ENCODE measurements at regions of chr14 and their contacts with region 1.

Region 1: DNA sequence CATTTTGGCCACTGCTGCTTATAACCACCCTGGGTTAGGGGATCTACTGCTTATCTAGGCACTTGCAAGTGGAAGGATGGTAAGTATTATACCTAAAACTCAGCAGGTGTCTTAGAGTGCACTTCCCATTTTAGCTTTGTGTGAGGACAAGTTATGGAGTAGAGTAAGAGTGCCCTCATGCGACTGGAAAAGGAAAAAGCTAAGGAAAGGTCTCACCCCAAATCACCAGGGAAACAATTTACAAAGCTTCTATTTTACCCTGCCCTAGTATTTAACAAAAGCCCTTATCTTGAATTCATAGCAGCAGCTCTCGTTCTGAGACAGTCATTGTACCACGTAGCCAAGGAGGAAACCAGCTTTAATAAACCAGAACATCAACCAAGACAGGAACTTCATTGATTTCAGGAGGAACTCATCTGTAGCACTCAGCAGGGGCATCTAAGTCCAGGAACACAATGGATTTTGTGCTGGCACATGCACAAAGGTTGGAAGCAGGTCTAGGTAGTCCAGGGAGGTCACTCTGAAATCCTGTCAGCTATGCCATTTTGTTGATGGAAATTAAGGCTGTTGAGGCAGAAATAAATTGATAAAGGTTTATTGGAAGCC is 2.9 kb downstream of the RDH12 start:
- DNase-seq: peak; percentile 77
- ATAC-seq: peak; percentile 78
- H3K4me3 ChIP-seq: no peak overlapping the region
- H3K4me3 Mint-ChIP-seq: no peak overlapping the region
- H3K27ac ChIP-seq: no peak overlapping the region
- H3K27ac Mint-ChIP-seq: no peak overlapping the region
- H3K4me1 ChIP-seq: peaks cover 2% of the 10 kb centered on the region in 2 donors
- H3K4me1 Mint-ChIP-seq: peaks cover 4% of the 10 kb centered on the region
- H3K27me3 ChIP-seq: no peaks in the 10 kb centered on the region
- H3K27me3 Mint-ChIP-seq: peaks cover 8% of the 10 kb centered on the region
- CTCF ChIP-seq: peak; percentile 72

Region 2: GRCh38 chr14:66359500-66359899 is 1345.1 kb before region 1 on chr14:
- CTCF ChIA-PET with region 1: interaction called, 21 read pairs
- POLR2A ChIA-PET with region 1: no interaction called
- intact Hi-C with region 1: no loop called
- DNase-seq: peak; percentile 68
- ATAC-seq: peak; percentile 36
- H3K4me3 ChIP-seq: no peak overlapping the region
- H3K4me3 Mint-ChIP-seq: no peak overlapping the region
- H3K27ac ChIP-seq: no peak overlapping the region
- H3K27ac Mint-ChIP-seq: no peak overlapping the region
- H3K4me1 ChIP-seq: no peaks in the 10 kb centered on the region
- H3K4me1 Mint-ChIP-seq: no peaks in the 10 kb centered on the region
- H3K27me3 ChIP-seq: peaks cover 0 to 5% (median 3%) of the 10 kb centered on the region in 4 experiments
- H3K27me3 Mint-ChIP-seq: peaks cover 11% of the 10 kb centered on the region
- CTCF ChIP-seq: peak; percentile 79

Region 3: DNA sequence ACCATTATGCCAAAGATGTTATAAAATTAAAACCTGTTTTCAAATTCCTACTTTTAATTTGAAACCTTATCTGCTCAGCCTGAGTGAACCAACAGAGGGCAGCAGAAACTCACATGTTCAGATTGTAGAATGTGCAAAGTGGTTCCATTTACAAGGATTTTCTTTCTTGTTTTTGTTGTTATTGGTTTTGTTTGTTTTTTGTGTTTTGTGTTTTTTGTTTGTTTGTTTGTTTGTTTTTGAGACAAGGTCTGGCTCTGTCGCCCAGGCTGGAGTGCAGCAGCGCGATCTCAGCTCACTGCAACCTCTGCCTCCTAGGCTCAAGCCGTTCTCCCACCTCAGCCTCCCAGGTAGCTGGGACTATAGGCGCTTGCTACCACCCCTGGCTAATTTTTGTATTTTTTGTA is 538.1 kb before region 1 on chr14:
- CTCF ChIA-PET with region 1: no interaction called
- POLR2A ChIA-PET with region 1: no interaction called
- intact Hi-C with region 1: loop called (anchors 10 kb)
- DNase-seq: peak; percentile 43
- ATAC-seq: no peak
- H3K4me3 ChIP-seq: no peak overlapping the region
- H3K4me3 Mint-ChIP-seq: no peak overlapping the region
- H3K27ac ChIP-seq: no peak overlapping the region
- H3K27ac Mint-ChIP-seq: no peak overlapping the region
- H3K4me1 ChIP-seq: no peaks in the 10 kb centered on the region
- H3K4me1 Mint-ChIP-seq: no peaks in the 10 kb centered on the region
- H3K27me3 ChIP-seq: no peaks in the 10 kb centered on the region
- H3K27me3 Mint-ChIP-seq: no peaks in the 10 kb centered on the region
- CTCF ChIP-seq: peak; percentile 75

Region 4: DNA sequence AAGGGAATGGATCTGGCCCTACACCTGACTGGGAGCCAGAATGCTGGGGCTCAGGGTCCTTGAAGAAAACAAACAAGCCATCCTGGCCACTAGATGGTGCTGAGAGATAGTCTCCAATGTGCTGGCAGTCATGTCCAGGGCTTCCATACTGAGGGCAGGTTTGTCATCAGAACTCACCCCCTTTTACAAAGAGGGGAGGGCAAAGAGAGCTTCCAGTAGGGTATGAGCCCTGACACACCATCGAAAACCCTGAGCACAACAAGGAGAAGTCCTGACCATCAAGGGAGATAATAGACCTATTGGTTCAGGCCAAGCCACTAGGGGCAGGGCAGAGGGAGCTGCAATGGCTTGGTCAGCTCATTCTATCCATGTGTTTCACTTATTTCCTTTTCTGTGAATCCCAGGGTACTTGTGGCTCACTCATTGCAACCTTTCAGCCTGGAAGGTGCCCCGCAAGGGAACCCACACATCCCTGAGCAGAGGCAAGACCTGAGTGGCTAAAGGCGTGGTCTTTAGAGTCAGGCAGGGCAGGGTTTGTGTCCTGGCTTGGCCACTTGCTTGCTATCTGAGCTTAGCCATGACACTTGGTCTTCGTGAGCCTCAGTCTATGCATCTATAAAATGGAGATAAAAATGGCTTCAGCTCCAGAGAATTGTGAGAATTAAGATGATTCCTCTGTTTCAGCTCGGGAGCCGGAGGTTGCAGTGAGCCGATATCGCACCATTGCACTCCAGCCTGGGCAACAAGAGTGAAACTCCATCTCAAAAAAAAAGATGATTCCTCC is 177.7 kb before region 1 on chr14:
- CTCF ChIA-PET with region 1: interaction called, 20 read pairs
- POLR2A ChIA-PET with region 1: no interaction called
- intact Hi-C with region 1: no loop called
- DNase-seq: peak; percentile 56
- ATAC-seq: peak; percentile 78
- H3K4me3 ChIP-seq: no peak overlapping the region
- H3K4me3 Mint-ChIP-seq: no peak overlapping the region
- H3K27ac ChIP-seq: no peak overlapping the region
- H3K27ac Mint-ChIP-seq: peak overlapping the region; percentile 21
- H3K4me1 ChIP-seq: peaks cover 0 to 4% of the 10 kb centered on the region in 2 donors
- H3K4me1 Mint-ChIP-seq: peaks cover 2% of the 10 kb centered on the region
- H3K27me3 ChIP-seq: peaks cover 0 to 42% (median 18%) of the 10 kb centered on the region in 4 experiments
- H3K27me3 Mint-ChIP-seq: peaks cover 56% of the 10 kb centered on the region
- CTCF ChIP-seq: peak; percentile 60

Region 5: GRCh38 chr14:67583711-67584644 is 120.6 kb before region 1 on chr14:
- CTCF ChIA-PET with region 1: interaction called, 392 read pairs
- POLR2A ChIA-PET with region 1: no interaction called
- intact Hi-C with region 1: loop called (anchors 1 kb)
- DNase-seq: peak; percentile 76
- ATAC-seq: peak; percentile 80
- H3K4me3 ChIP-seq: no peak overlapping the region
- H3K4me3 Mint-ChIP-seq: no peak overlapping the region
- H3K27ac ChIP-seq: no peak overlapping the region
- H3K27ac Mint-ChIP-seq: no peak overlapping the region
- H3K4me1 ChIP-seq: no peaks in the 10 kb centered on the region
- H3K4me1 Mint-ChIP-seq: peaks cover 6% of the 10 kb centered on the region
- H3K27me3 ChIP-seq: no peaks in the 10 kb centered on the region
- H3K27me3 Mint-ChIP-seq: no peaks in the 10 kb centered on the region
- CTCF ChIP-seq: peak; percentile 85

Region 6: GRCh38 chr14:67619446-67620216 is 85.0 kb before region 1 on chr14 and contains the start of gene ARG2:
- CTCF ChIA-PET with region 1: interaction called, 36 read pairs
- POLR2A ChIA-PET with region 1: no interaction called
- intact Hi-C with region 1: loop called (anchors 1 kb)
- DNase-seq: peak; percentile 98
- ATAC-seq: peak; percentile 94
- H3K4me3 ChIP-seq: peak within 1 kb of the TSS; percentile 57 to 94 (median 81)
- H3K4me3 Mint-ChIP-seq: peak within 1 kb of the TSS; percentile 92
- H3K27ac ChIP-seq: peak within 1 kb of the TSS; percentile 76 to 78
- H3K27ac Mint-ChIP-seq: peak within 1 kb of the TSS; percentile 94
- H3K4me1 ChIP-seq: peaks cover 12 to 18% of the 10 kb centered on the region in 2 donors
- H3K4me1 Mint-ChIP-seq: peaks cover 23% of the 10 kb centered on the region
- H3K27me3 ChIP-seq: peaks cover 0 to 4% (median 0%) of the 10 kb centered on the region in 4 experiments
- H3K27me3 Mint-ChIP-seq: no peaks in the 10 kb centered on the region
- CTCF ChIP-seq: no peak
- total RNA-seq, gene ARG2: 1.8 and 2.0 TPM in 2 replicates

Region 7: GRCh38 chr14:67666750-67667449 is 37.7 kb before region 1 on chr14:
- CTCF ChIA-PET with region 1: interaction called, 14 read pairs
- POLR2A ChIA-PET with region 1: no interaction called
- intact Hi-C with region 1: loop called (anchors 2 kb)
- DNase-seq: peak; percentile 74
- ATAC-seq: peak; percentile 75
- H3K4me3 ChIP-seq: no peak overlapping the region
- H3K4me3 Mint-ChIP-seq: peak overlapping the region; percentile 60
- H3K27ac ChIP-seq: peak overlapping the region; percentile 45 to 74
- H3K27ac Mint-ChIP-seq: peak overlapping the region; percentile 78
- H3K4me1 ChIP-seq: peaks cover 22 to 23% of the 10 kb centered on the region in 2 donors
- H3K4me1 Mint-ChIP-seq: peaks cover 51% of the 10 kb centered on the region
- H3K27me3 ChIP-seq: no peaks in the 10 kb centered on the region
- H3K27me3 Mint-ChIP-seq: no peaks in the 10 kb centered on the region
- CTCF ChIP-seq: peak; percentile 80